H1 (cell line): ENCODE measurements at regions of chr17 and their contacts with region 1.

Region 1: DNA sequence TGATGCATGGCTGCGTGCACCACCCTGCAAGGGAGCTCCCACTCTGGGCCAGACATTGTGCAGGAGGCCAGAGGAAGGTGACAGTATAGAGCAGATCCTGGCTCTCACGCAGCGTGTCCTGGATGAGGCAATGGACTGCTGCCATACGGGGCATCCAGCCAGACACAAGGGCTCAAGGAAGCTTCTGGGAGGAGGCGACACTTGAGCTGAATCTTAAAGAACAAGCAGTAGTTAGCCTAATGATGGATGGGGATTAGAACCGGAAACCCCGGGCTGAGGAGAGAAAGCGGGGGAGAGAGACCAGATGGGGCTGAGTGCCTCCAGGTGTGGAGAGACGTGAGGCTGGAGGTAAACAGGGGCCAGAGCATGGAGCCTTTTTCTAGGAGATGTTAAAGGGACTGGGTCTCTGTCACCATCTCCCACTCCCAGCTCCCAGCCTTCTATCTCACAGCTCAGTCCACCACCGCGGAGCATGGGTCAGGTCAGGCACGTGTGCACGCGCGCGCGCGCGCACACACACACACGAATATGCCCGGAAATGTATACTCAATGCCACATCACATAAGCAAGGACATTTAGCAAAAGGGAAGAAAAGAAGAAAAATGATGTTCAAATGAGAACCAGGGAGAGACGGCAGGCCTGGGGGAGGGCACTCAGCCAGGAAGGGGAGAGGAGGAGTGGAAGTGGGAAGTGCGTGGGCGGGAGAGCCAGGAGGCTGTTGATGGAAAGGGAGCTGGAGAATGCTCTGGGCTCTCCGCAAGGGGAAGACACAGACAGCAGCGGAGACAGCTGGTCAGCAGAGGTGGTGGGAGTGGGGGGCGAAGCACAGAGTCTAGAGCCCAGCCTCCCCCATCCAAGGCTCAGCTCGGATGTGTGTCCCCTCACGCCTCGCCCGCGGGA is 46.2 kb downstream of the CCDC42 start:
- DNase-seq: no peak
- H3K4me3 ChIP-seq: no peak overlapping the region
- H3K27ac ChIP-seq: peak overlapping the region; percentile 19; the same call in 1 of the 2 replicates
- H3K4me1 ChIP-seq: peaks cover 12 to 24% (median 18%) of the 10 kb centered on the region in 4 experiments; a peak in 6 of 7 replicates
- H3K27me3 ChIP-seq: no peaks in the 10 kb centered on the region
- CTCF ChIP-seq: no peak
- EP300 ChIP-seq: no peak
- POLR2A ChIP-seq: no peak
- RAD21 ChIP-seq: no peak

Region 2: GRCh38 chr17:8713878-8714277 is 15.5 kb after region 1 on chr17:
- CTCF ChIA-PET with region 1: interaction called, 4 read pairs
- POLR2A ChIA-PET with region 1: interaction called, 33 read pairs
- DNase-seq: no peak
- H3K4me3 ChIP-seq: no peak overlapping the region
- H3K27ac ChIP-seq: no peak overlapping the region
- H3K4me1 ChIP-seq: peaks cover 0 to 2% (median 0%) of the 10 kb centered on the region in 4 experiments; a peak in 1 of 7 replicates
- H3K27me3 ChIP-seq: no peaks in the 10 kb centered on the region
- CTCF ChIP-seq: no peak
- EP300 ChIP-seq: no peak
- POLR2A ChIP-seq: no peak
- RAD21 ChIP-seq: no peak

Region 3: DNA sequence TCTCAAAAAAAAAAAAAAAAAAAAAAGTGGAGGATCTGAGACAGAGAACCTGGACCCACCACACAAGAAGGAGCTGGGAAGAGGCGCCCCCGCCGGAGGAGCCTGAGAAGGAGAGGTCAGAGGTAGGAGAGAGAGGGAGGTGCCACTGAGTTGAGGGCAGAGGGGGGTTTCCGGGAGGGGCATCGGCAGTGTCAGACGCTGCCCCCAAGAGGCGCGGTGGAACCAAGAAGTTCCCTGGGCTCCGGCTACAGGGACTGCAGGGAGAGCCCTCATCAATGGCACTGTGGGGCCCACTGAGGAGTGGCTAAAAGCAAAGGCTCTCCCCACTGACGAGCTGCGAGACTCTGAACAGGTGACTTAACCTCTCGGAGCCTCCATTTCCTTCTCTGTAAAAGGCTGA is 42.1 kb after region 1 on chr17:
- CTCF ChIA-PET with region 1: interaction called, 3 read pairs
- POLR2A ChIA-PET with region 1: interaction called, 12 read pairs
- DNase-seq: peak in 1 of 2 experiments; percentile 61
- H3K4me3 ChIP-seq: no peak overlapping the region
- H3K27ac ChIP-seq: no peak overlapping the region
- H3K4me1 ChIP-seq: peaks cover 0 to 4% (median under 1%) of the 10 kb centered on the region in 4 experiments; a peak in 3 of 7 replicates
- H3K27me3 ChIP-seq: no peaks in the 10 kb centered on the region; a peak in 1 of 7 replicates
- CTCF ChIP-seq: peak; percentile 38 to 46 (median 42); a peak in 3 of 4 replicates
- EP300 ChIP-seq: 0 out of 3 replicates have a peak, but pooled peaks of 1 of the 2 experiments have one; percentile 16
- POLR2A ChIP-seq: no peak
- RAD21 ChIP-seq: peak; percentile 51 to 56; a peak in 3 of 4 replicates